IMR-90 (cell line): ENCODE measurements at regions of chr13 and their contacts with region 1.

Region 1: GRCh38 chr13:41645331-41645730 is 188.0 kb downstream of the RGCC start:
- DNase-seq: peak; percentile 90
- ATAC-seq: peak; percentile 75
- H3K4me3 ChIP-seq: no peak overlapping the region
- H3K27ac ChIP-seq: peak overlapping the region; percentile 85; the same call in 1 of the 2 replicates
- H3K4me1 ChIP-seq: peaks cover 14% of the 10 kb centered on the region
- H3K27me3 ChIP-seq: no peaks in the 10 kb centered on the region
- CTCF ChIP-seq: no peak
- POLR2A ChIP-seq: no peak
- RAD21 ChIP-seq: 0 out of 2 replicates have a peak, but pooled peaks have one; percentile 12

Region 2: DNA sequence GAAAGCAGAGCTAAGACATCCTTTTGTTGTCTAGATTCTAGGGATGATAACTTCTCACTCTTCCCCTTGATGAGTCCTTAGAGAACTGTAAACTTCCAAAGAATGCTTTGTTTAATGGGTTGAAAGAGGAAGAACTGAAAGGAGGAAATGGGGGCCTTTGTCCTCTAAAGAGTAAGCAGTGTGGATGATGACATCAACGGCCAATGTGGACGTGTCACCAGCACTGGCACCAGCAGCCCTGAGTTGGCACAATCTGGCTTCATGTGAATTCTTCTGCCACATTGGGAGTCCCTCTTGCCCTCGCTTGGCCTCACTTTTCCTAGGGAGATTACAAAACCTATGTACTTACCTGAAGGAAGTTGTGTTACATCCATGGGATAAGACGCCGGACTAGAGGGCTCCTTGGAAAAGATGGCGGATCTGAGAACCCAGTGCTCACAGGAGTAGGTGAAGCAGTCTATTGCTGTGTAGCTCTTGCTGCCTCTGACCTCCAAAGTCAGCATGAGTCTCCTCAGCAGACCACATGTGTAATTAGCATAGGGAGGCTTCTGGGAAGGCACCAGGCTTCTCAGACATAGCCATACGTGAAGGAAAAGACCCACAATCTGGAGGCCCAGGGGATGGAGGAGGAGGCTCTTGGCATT is 125.2 kb before region 1 on chr13:
- CTCF ChIA-PET with region 1: no interaction called
- POLR2A ChIA-PET with region 1: no interaction called
- dilution Hi-C with region 1: no loop called
- in situ Hi-C with region 1: no loop called
- intact Hi-C with region 1: no loop called
- DNase-seq: no peak
- ATAC-seq: no peak
- H3K4me3 ChIP-seq: no peak overlapping the region
- H3K27ac ChIP-seq: no peak overlapping the region
- H3K4me1 ChIP-seq: no peaks in the 10 kb centered on the region
- H3K27me3 ChIP-seq: no peaks in the 10 kb centered on the region
- CTCF ChIP-seq: no peak
- POLR2A ChIP-seq: no peak
- RAD21 ChIP-seq: no peak

Region 3: GRCh38 chr13:41613984-41614661 is 31.2 kb before region 1 on chr13:
- CTCF ChIA-PET with region 1: no interaction called
- POLR2A ChIA-PET with region 1: no interaction called
- dilution Hi-C with region 1: no loop called
- in situ Hi-C with region 1: no loop called
- intact Hi-C with region 1: loop called (anchors 1 kb)
- DNase-seq: peak; percentile 96
- ATAC-seq: peak; percentile 53
- H3K4me3 ChIP-seq: no peak overlapping the region
- H3K27ac ChIP-seq: peak overlapping the region; percentile 89
- H3K4me1 ChIP-seq: peaks cover 29% of the 10 kb centered on the region
- H3K27me3 ChIP-seq: no peaks in the 10 kb centered on the region
- CTCF ChIP-seq: no peak
- POLR2A ChIP-seq: no peak; the same call in 1 of the 2 replicates
- RAD21 ChIP-seq: no peak; the same call in 1 of the 2 replicates

Region 4: GRCh38 chr13:41631296-41631965 is 13.9 kb before region 1 on chr13:
- CTCF ChIA-PET with region 1: no interaction called
- POLR2A ChIA-PET with region 1: no interaction called
- dilution Hi-C with region 1: no loop called
- in situ Hi-C with region 1: no loop called
- intact Hi-C with region 1: loop called (anchors 2 kb)
- DNase-seq: peak; percentile 88
- ATAC-seq: peak; percentile 80
- H3K4me3 ChIP-seq: no peak overlapping the region
- H3K27ac ChIP-seq: peak overlapping the region; percentile 88
- H3K4me1 ChIP-seq: peaks cover 29% of the 10 kb centered on the region
- H3K27me3 ChIP-seq: no peaks in the 10 kb centered on the region
- CTCF ChIP-seq: no peak
- POLR2A ChIP-seq: no peak
- RAD21 ChIP-seq: no peak